ENCODE measurements at regions of chr6 and their contacts with region 1.

Region 1: GRCh38 chr6:125153391-125154117 is at the start of gene TPD52L1:
- DNase-seq: peak; percentile 87
- H3K4me3 ChIP-seq: peak within 1 kb of the TSS; percentile 56 to 71 (median 64)
- H3K27ac ChIP-seq: peak within 1 kb of the TSS; percentile 67 to 90 (median 90)
- H3K4me1 ChIP-seq: peaks cover 0 to 49% (median 24%) of the 10 kb centered on the region in 4 donors
- H3K27me3 ChIP-seq: no peaks in the 10 kb centered on the region
- CTCF ChIP-seq: peak; percentile 53 to 85 (median 60)
- EP300 ChIP-seq: no peak
- POLR2A ChIP-seq: no peak
- total RNA-seq, gene TPD52L1: 61.0 to 98.9 (median 73.8) TPM

Region 2: GRCh38 chr6:124535751-124536150 is 617.8 kb before region 1 on chr6:
- intact Hi-C with region 1: no loop called
- DNase-seq: no peak
- H3K4me3 ChIP-seq: no peak overlapping the region
- H3K27ac ChIP-seq: no peak overlapping the region
- H3K4me1 ChIP-seq: no peaks in the 10 kb centered on the region
- H3K27me3 ChIP-seq: no peaks in the 10 kb centered on the region
- CTCF ChIP-seq: no peak
- EP300 ChIP-seq: no peak
- POLR2A ChIP-seq: no peak

Region 3: GRCh38 chr6:125001684-125002405 is 151.7 kb before region 1 on chr6:
- intact Hi-C with region 1: no loop called
- DNase-seq: no peak
- H3K4me3 ChIP-seq: peak overlapping the region in 2 of 4 donors; percentile 7
- H3K27ac ChIP-seq: peak overlapping the region in 3 of 4 donors; percentile 12 to 63 (median 50)
- H3K4me1 ChIP-seq: peaks cover 0 to 45% (median 30%) of the 10 kb centered on the region in 4 donors
- H3K27me3 ChIP-seq: no peaks in the 10 kb centered on the region
- CTCF ChIP-seq: no peak
- EP300 ChIP-seq: no peak
- POLR2A ChIP-seq: no peak

Region 4: GRCh38 chr6:125232476-125232875 is 78.9 kb after region 1 on chr6:
- intact Hi-C with region 1: loop called (anchors 5 kb)
- DNase-seq: no peak
- H3K4me3 ChIP-seq: no peak overlapping the region
- H3K27ac ChIP-seq: peak overlapping the region in 3 of 4 donors; percentile 46 to 71 (median 64)
- H3K4me1 ChIP-seq: peaks cover 0 to 46% (median 29%) of the 10 kb centered on the region in 4 donors
- H3K27me3 ChIP-seq: no peaks in the 10 kb centered on the region
- CTCF ChIP-seq: no peak
- EP300 ChIP-seq: no peak
- POLR2A ChIP-seq: no peak

Region 5: DNA sequence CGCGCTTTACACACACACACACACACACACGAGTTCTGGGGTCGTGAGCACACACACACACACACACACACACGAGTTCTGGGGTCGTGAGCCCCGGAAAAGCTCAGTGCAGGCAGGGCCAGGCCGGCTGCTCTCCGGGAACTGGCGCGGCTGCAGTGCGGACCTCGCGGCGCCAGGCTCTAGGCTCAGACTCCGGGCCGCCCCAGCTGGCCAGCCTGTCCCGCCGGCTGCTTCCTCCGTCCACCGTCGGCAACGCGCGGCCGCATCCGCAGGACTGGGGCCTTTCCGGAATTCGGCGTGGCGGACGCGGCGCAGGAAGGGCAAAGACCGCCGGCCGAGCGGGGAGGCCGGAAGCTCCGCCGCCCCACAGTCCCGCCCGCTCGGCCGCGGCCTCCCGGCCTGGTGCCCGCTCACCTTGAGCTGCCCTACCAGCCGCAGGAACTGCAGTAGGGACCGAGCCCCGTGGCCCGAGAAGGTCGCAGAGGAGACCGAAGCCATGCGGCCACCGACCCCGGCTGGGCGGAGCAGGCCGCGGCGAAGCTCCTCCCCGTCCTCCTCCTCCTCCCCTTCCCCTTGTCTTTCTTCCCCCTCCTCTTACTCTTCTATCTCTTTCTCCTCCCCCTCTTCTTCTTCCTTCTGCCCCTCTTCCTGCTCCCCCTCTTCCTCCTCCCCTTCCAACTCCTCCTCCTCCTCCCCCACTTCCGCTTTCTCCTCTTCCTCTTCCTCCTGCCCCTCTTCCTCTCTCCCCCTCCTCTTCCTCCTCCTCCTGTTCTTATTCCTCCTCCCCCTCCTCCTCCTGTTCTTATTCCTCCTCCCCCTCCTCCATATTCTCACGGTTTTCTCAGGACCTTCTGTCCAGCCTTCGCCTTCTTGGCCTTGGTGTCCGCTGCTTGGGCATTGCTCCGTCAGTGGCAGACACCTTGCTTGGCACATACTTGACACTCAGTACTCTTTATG is 148.2 kb after region 1 on chr6 and contains the start of gene HDDC2:
- intact Hi-C with region 1: loop called (anchors 1 kb)
- DNase-seq: peak; percentile 84
- H3K4me3 ChIP-seq: peak within 1 kb of the TSS; percentile 44 to 87 (median 70)
- H3K27ac ChIP-seq: peak within 1 kb of the TSS; percentile 91 to 94 (median 93)
- H3K4me1 ChIP-seq: peaks cover 0 to 17% (median 16%) of the 10 kb centered on the region in 4 donors
- H3K27me3 ChIP-seq: no peaks in the 10 kb centered on the region
- CTCF ChIP-seq: no peak
- EP300 ChIP-seq: no peak
- POLR2A ChIP-seq: no peak
- total RNA-seq, gene HDDC2: 39.9 to 61.7 (median 55.8) TPM

Region 6: DNA sequence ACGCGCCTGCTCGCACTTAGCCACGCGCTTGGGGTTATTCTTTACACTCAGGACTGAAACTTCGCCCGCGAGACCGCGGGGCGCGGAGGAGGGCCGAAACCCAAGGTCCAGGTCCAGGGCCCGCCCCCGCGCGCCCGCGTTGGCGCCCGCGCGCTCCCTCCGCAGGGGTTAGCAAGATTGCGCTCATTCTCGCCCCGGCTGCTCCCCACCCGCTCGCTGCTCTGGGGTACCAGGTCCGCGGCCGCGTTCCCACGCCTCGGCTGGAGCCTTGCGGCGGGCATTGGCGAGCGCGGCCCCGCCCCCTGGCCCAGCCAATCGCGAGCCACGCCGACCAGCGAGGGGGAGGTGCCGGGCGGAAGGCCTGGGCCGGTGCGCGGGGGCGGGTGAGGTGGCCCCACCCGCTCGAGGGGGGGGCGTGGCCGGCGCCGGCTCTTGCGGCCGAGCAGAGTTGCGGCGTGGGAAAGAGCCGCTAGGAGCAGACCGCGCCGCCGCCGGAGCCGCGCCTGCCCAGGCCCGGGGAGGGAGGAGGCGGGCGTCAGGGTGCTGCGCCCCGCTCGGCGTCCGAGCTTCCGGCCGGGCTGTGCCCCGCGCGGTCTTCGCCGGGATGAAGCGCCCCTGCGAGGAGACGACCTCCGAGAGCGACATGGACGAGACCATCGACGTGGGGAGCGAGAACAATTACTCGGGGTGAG is 595.8 kb after region 1 on chr6 and contains the start of gene HEY2:
- intact Hi-C with region 1: loop called (anchors 10 kb)
- DNase-seq: peak; percentile 96
- H3K4me3 ChIP-seq: peak within 1 kb of the TSS; percentile 53 to 74 (median 70)
- H3K27ac ChIP-seq: peak within 1 kb of the TSS; percentile 86 to 89 (median 88)
- H3K4me1 ChIP-seq: peaks cover 0 to 33% (median 21%) of the 10 kb centered on the region in 4 donors
- H3K27me3 ChIP-seq: peaks cover 0 to 44% (median 0%) of the 10 kb centered on the region in 3 donors
- CTCF ChIP-seq: peak in 1 of 4 experiments; percentile 28
- EP300 ChIP-seq: peak in 1 of 4 donors; percentile 40
- POLR2A ChIP-seq: peak in 1 of 2 donors; percentile 17
- total RNA-seq, gene HEY2: 1.3 to 3.9 (median 2.1) TPM

Region 7: DNA sequence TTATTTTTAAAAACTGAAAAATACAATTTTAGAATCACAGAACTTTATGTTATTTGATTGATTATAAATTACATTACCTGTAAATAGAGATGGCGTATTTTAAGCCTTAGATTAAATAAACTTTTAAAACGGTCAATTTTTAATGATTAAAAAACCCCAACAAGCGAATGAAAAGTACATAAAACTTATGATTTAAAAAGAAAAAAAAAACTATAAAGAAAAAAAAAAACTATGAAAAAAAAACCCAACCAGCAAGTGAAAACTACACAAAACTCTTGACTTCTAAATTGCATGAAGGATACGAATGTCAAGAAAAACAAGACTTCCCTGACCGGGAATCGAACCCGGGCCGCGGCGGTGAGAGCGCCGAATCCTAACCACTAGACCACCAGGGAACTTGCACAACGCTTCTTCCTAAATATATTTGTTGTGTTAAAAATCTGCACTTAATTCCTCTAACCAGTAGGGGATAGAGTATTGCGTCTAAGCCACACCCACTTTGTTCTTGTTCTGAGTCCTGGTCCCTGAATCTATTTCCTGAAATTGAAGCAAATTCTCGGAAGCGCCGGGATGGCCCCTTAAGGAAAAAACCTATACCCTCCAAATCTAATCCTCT is 626.5 kb after region 1 on chr6:
- intact Hi-C with region 1: loop called (anchors 5 kb)
- DNase-seq: peak; percentile 90
- H3K4me3 ChIP-seq: peak overlapping the region; percentile 38 to 65 (median 56)
- H3K27ac ChIP-seq: peak overlapping the region; percentile 82 to 94 (median 88)
- H3K4me1 ChIP-seq: peaks cover 0 to 11% (median 5%) of the 10 kb centered on the region in 4 donors
- H3K27me3 ChIP-seq: no peaks in the 10 kb centered on the region
- CTCF ChIP-seq: peak; percentile 37 to 51 (median 42)
- EP300 ChIP-seq: no peak
- POLR2A ChIP-seq: no peak